CD4-positive, alpha-beta memory T cell (primary cell): ENCODE measurements at regions of chr22 and their contacts with region 1.

Region 1: GRCh38 chr22:36331306-36331911 is 56.4 kb downstream of the MYH9 start:
- DNase-seq: peak; percentile 69 to 93 (median 78)
- H3K4me3 ChIP-seq: peak overlapping the region; percentile 14 to 53
- H3K4me3 Mint-ChIP-seq: peak overlapping the region; percentile 87 to 94 (median 88)
- H3K27ac ChIP-seq: peak overlapping the region; percentile 84
- H3K27ac Mint-ChIP-seq: peak overlapping the region; percentile 94 to 99 (median 99)
- H3K4me1 ChIP-seq: peaks cover 94% of the 10 kb centered on the region
- H3K4me1 Mint-ChIP-seq: peaks cover 86 to 100% (median 93%) of the 10 kb centered on the region in 4 donors
- H3K27me3 ChIP-seq: no peaks in the 10 kb centered on the region
- H3K27me3 Mint-ChIP-seq: no peaks in the 10 kb centered on the region

Region 2: DNA sequence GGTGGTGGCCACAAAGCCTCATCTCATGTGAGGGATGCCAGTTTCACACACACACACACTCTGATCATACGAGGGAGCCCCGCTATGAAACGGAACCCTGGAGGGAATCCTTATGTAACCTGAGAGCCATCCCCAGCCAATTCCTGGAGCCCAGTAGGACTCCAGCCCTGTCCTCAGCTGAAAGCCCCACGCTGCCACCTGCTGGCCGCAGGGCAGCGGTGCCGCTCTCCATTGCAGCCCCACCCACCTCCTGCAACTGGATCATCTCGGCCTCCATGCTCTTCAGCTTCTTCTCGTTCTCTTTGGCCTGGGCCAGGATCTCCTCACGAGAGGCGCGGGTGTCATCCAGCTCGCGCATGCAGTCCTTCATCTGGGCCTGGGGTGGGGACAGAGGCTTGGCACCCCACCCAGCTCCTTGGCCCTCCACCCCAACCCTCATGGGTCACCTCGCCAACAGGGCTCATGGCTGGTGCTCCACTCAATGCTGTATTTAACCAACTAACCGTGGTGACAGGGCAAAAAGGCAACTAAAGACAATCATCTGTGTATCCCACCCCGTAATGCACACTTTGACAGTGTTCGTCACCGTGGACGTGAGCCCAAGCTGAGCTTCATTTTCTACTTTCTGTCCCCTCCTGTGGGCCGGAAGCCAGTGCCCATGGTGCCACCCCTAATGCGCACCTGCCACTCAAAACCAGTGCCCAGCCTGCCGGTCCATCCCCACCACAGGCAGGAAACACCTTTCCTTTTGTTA is 44.8 kb before region 1 on chr22:
- CTCF ChIA-PET with region 1: interaction called, 3 read pairs
- POLR2A ChIA-PET with region 1: interaction called, 59 read pairs
- intact Hi-C with region 1: no loop called
- DNase-seq: peak in 4 of 5 donors; percentile 56 to 68 (median 60)
- H3K4me3 ChIP-seq: no peak overlapping the region
- H3K4me3 Mint-ChIP-seq: peak overlapping the region in 6 of 8 donors; percentile 29 to 73 (median 56)
- H3K27ac ChIP-seq: peak overlapping the region; percentile 10
- H3K27ac Mint-ChIP-seq: peak overlapping the region; percentile 83 to 94 (median 89)
- H3K4me1 ChIP-seq: peaks cover 43% of the 10 kb centered on the region
- H3K4me1 Mint-ChIP-seq: peaks cover 20 to 48% (median 34%) of the 10 kb centered on the region in 4 donors
- H3K27me3 ChIP-seq: no peaks in the 10 kb centered on the region
- H3K27me3 Mint-ChIP-seq: no peaks in the 10 kb centered on the region

Region 3: GRCh38 chr22:36350751-36351594 is 19.6 kb after region 1 on chr22:
- CTCF ChIA-PET with region 1: interaction called, 6 read pairs
- POLR2A ChIA-PET with region 1: interaction called, 2,535 read pairs
- intact Hi-C with region 1: loop called (anchors 2 kb)
- DNase-seq: peak in 1 of 5 donors; percentile 39
- H3K4me3 ChIP-seq: no peak overlapping the region
- H3K4me3 Mint-ChIP-seq: peak overlapping the region in 7 of 8 donors; percentile 62 to 89 (median 66)
- H3K27ac ChIP-seq: peak overlapping the region; percentile 64
- H3K27ac Mint-ChIP-seq: peak overlapping the region; percentile 90 to 95 (median 92)
- H3K4me1 ChIP-seq: peaks cover 94% of the 10 kb centered on the region
- H3K4me1 Mint-ChIP-seq: peaks cover 65 to 95% (median 79%) of the 10 kb centered on the region in 4 donors
- H3K27me3 ChIP-seq: no peaks in the 10 kb centered on the region
- H3K27me3 Mint-ChIP-seq: no peaks in the 10 kb centered on the region

Region 4: DNA sequence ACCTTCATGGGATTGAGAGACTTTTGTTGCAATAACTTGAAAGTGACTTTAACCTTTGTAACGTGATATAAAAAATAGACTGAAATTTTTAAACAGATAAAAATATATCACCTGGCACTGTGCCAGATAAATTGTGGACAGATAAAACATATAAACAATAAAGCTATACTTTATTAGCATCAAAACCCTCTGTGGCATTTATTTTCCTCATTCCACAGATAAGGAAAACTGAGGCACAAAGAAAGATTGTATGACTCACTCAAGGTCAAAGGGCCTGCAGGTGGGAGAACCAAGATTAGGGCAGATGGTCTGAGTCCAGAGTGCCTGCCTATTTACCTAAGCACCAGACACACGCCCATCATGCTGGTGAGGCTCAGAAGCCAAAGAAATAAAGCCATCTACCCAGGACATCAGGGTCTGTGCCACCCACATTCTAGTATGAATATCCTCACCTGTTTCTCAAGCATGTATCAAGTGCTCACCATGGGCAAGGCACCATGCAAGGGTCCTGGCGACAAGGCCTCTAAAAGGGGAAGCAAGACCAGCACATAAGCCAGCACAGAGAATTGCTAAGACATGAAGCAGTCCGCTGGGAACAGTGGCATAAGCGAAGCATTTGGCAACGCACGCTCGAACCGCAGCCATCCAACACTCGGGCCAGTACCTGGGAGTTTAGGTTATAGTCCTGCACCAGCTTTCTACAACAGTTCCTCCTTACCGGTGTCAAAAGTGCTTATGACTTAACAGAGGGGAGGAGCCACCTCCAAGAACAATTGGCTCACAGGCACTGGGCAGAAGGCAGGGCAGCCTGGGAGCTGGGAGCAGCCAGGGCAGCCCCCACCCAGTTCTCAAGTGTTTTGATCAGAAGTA is 38.7 kb after region 1 on chr22:
- CTCF ChIA-PET with region 1: interaction called, 10 read pairs
- POLR2A ChIA-PET with region 1: interaction called, 2,535 read pairs
- intact Hi-C with region 1: loop called (anchors 5 kb)
- DNase-seq: peak in 1 of 5 donors; percentile 65
- H3K4me3 ChIP-seq: peak overlapping the region in 1 of 2 donors; percentile 32
- H3K4me3 Mint-ChIP-seq: peak overlapping the region; percentile 84 to 93 (median 88)
- H3K27ac ChIP-seq: peak overlapping the region; percentile 91
- H3K27ac Mint-ChIP-seq: peak overlapping the region; percentile 92 to 99 (median 98)
- H3K4me1 ChIP-seq: peaks cover 100% of the 10 kb centered on the region
- H3K4me1 Mint-ChIP-seq: peaks cover 74 to 100% (median 87%) of the 10 kb centered on the region in 4 donors
- H3K27me3 ChIP-seq: no peaks in the 10 kb centered on the region
- H3K27me3 Mint-ChIP-seq: no peaks in the 10 kb centered on the region

Region 5: DNA sequence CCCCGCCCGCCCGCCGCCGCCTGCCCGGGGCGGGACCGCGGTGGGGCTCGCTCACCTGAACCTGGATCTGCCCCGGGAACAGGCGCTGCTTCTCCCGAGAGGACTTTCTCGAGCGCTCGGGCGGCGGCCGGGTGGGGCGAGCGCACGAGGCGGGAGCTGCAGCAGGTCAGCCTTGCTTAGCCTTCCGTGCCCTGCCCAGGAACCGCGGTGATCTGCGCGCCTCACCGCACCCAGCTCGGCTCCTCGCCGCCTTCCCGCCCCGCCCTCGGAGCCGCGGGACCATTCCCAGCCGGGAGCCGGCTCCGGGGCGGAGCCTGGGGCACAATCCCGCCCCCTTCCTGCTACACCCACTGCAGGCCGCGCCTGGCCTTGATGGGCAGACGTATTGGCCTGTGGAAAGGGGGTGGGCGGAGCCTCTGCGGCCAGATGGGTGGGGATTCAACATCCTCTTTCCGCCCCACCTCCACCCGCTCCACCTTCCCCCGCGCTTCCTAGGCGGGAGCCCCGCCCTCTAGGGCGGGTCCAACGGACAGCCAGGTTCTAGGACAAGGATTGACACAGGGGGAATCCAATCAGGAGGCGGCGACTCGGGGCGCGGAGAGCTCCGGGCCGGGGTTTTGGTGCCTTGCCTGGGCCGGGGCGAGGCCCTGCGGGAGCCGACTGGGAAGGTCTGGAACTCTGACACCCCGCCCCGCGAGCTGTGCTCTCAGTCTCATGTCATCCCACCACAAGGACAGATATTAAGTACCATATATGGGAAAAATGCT is 56.5 kb after region 1 on chr22 and contains the start of gene MYH9:
- CTCF ChIA-PET with region 1: interaction called, 15 read pairs
- POLR2A ChIA-PET with region 1: interaction called, 2,535 read pairs
- intact Hi-C with region 1: loop called (anchors 1 kb)
- DNase-seq: peak; percentile 99
- H3K4me3 ChIP-seq: peak within 1 kb of the TSS; percentile 88 to 92
- H3K4me3 Mint-ChIP-seq: peak within 1 kb of the TSS; percentile 88 to 98 (median 94)
- H3K27ac ChIP-seq: peak within 1 kb of the TSS; percentile 80
- H3K27ac Mint-ChIP-seq: peak within 1 kb of the TSS; percentile 84 to 99 (median 97)
- H3K4me1 ChIP-seq: peaks cover 28% of the 10 kb centered on the region
- H3K4me1 Mint-ChIP-seq: peaks cover 12 to 45% (median 26%) of the 10 kb centered on the region in 4 donors
- H3K27me3 ChIP-seq: no peaks in the 10 kb centered on the region
- H3K27me3 Mint-ChIP-seq: no peaks in the 10 kb centered on the region
- total RNA-seq, gene MYH9: 717 to 734 TPM

Region 6: GRCh38 chr22:36454916-36455570 is 123.6 kb after region 1 on chr22:
- CTCF ChIA-PET with region 1: interaction called, 9 read pairs
- POLR2A ChIA-PET with region 1: interaction called, 62 read pairs
- intact Hi-C with region 1: loop called (anchors 2 kb)
- DNase-seq: peak; percentile 93 to 95 (median 94)
- H3K4me3 ChIP-seq: peak overlapping the region; percentile 57 to 78
- H3K4me3 Mint-ChIP-seq: peak overlapping the region; percentile 53 to 85 (median 82)
- H3K27ac ChIP-seq: peak overlapping the region; percentile 88
- H3K27ac Mint-ChIP-seq: peak overlapping the region; percentile 92 to 98 (median 93)
- H3K4me1 ChIP-seq: peaks cover 55% of the 10 kb centered on the region
- H3K4me1 Mint-ChIP-seq: peaks cover 29 to 48% (median 44%) of the 10 kb centered on the region in 4 donors
- H3K27me3 ChIP-seq: no peaks in the 10 kb centered on the region
- H3K27me3 Mint-ChIP-seq: no peaks in the 10 kb centered on the region